ENCODE measurements at regions of chr5 and their contacts with region 1.

Region 1: DNA sequence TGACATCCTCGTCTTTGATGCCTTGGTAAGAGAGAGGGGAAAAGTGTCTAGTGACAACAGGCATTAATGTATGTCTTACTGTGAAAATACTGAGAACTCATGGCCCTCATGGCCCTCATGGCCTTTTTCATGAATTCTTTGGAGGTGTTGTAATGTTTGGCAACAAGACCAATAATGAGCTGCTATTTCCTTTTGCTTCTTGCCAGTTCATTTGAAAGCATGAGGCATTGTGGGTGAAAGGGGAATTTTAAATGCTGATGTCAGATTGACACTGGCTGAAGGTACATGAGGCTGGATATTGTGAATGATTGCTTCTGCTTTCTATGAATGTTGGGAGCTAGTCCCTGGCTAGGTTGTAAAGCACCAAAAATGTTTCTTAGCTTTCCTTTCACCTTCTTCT is 79.2 kb downstream of the DOCK2 start:
- DNase-seq: peak; percentile 74
- ATAC-seq: peak; percentile 42
- H3K4me3 ChIP-seq: no peak overlapping the region
- H3K27ac ChIP-seq: no peak overlapping the region
- H3K4me1 ChIP-seq: peaks cover 15% of the 10 kb centered on the region
- H3K27me3 ChIP-seq: no peaks in the 10 kb centered on the region
- CTCF ChIP-seq: no peak
- POLR2A ChIP-seq: no peak
- RAD21 ChIP-seq: no peak

Region 2: DNA sequence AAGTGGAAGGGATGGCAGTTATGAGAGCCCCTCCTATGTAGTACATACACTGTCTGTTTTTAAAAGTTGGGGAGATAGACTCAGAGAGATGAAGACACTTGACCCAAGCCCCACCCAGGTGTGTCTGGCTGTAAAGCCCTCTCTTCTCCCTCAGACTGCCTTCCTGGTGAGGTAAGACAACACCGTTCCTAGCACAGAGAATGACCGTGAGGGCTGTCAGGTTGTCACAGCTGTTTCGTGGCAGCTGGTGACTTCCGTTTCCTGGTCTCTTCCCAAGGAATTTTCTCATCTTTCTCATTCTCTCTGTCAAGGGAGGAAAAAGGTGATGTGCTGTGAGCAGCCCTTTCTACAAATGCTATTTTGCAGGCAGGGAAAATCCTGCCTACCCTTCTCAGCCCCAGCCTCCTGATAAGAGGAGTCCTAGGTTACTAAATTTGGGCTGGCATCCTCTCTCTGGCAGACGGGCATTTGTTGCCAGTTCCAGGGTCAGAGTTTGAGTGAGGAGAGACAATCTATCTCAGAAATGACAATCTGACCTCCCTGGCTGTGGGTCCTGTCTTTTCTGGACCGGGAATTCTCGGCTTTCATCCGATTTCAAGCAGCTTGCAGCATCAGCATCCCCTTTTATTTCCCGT is 873.6 kb before region 1 on chr5:
- CTCF ChIA-PET with region 1: no interaction called
- POLR2A ChIA-PET with region 1: interaction called, 10 read pairs
- dilution Hi-C with region 1: no loop called
- in situ Hi-C with region 1: no loop called
- intact Hi-C with region 1: no loop called
- DNase-seq: no peak
- ATAC-seq: no peak
- H3K4me3 ChIP-seq: no peak overlapping the region
- H3K27ac ChIP-seq: no peak overlapping the region
- H3K4me1 ChIP-seq: no peaks in the 10 kb centered on the region
- H3K27me3 ChIP-seq: no peaks in the 10 kb centered on the region; the same call in none of the 2 replicates
- CTCF ChIP-seq: no peak
- POLR2A ChIP-seq: no peak
- RAD21 ChIP-seq: no peak

Region 3: GRCh38 chr5:169067751-169068173 is 648.5 kb before region 1 on chr5:
- CTCF ChIA-PET with region 1: no interaction called
- POLR2A ChIA-PET with region 1: no interaction called
- dilution Hi-C with region 1: no loop called
- in situ Hi-C with region 1: no loop called
- intact Hi-C with region 1: no loop called
- DNase-seq: no peak
- ATAC-seq: no peak
- H3K4me3 ChIP-seq: no peak overlapping the region
- H3K27ac ChIP-seq: no peak overlapping the region
- H3K4me1 ChIP-seq: no peaks in the 10 kb centered on the region
- H3K27me3 ChIP-seq: no peaks in the 10 kb centered on the region
- CTCF ChIP-seq: no peak
- POLR2A ChIP-seq: no peak
- RAD21 ChIP-seq: no peak

Region 4: GRCh38 chr5:169591636-169592035 is 124.6 kb before region 1 on chr5:
- CTCF ChIA-PET with region 1: no interaction called
- POLR2A ChIA-PET with region 1: no interaction called
- dilution Hi-C with region 1: no loop called
- in situ Hi-C with region 1: no loop called
- intact Hi-C with region 1: no loop called
- DNase-seq: peak; percentile 88
- ATAC-seq: peak; percentile 74
- H3K4me3 ChIP-seq: no peak overlapping the region
- H3K27ac ChIP-seq: no peak overlapping the region
- H3K4me1 ChIP-seq: peaks cover 3% of the 10 kb centered on the region; the same call in 1 of the 2 replicates
- H3K27me3 ChIP-seq: no peaks in the 10 kb centered on the region
- CTCF ChIP-seq: no peak
- POLR2A ChIP-seq: no peak
- RAD21 ChIP-seq: no peak

Region 5: GRCh38 chr5:169765176-169765996 is 49.1 kb after region 1 on chr5:
- CTCF ChIA-PET with region 1: no interaction called
- POLR2A ChIA-PET with region 1: no interaction called
- dilution Hi-C with region 1: no loop called
- in situ Hi-C with region 1: no loop called
- intact Hi-C with region 1: loop called (anchors 5 kb)
- DNase-seq: peak; percentile 40
- ATAC-seq: no peak
- H3K4me3 ChIP-seq: no peak overlapping the region
- H3K27ac ChIP-seq: no peak overlapping the region
- H3K4me1 ChIP-seq: peaks cover 7% of the 10 kb centered on the region
- H3K27me3 ChIP-seq: no peaks in the 10 kb centered on the region
- CTCF ChIP-seq: no peak
- POLR2A ChIP-seq: no peak
- RAD21 ChIP-seq: no peak

Region 6: GRCh38 chr5:169880012-169880663 is 163.9 kb after region 1 on chr5:
- CTCF ChIA-PET with region 1: no interaction called
- POLR2A ChIA-PET with region 1: no interaction called
- dilution Hi-C with region 1: no loop called
- in situ Hi-C with region 1: no loop called
- intact Hi-C with region 1: no loop called
- DNase-seq: no peak
- ATAC-seq: no peak
- H3K4me3 ChIP-seq: no peak overlapping the region
- H3K27ac ChIP-seq: no peak overlapping the region
- H3K4me1 ChIP-seq: peaks cover 10% of the 10 kb centered on the region
- H3K27me3 ChIP-seq: no peaks in the 10 kb centered on the region
- CTCF ChIP-seq: no peak
- POLR2A ChIP-seq: no peak
- RAD21 ChIP-seq: no peak